IMR-90 (cell line): ENCODE measurements at regions of chr14 and their contacts with region 1.

Region 1: DNA sequence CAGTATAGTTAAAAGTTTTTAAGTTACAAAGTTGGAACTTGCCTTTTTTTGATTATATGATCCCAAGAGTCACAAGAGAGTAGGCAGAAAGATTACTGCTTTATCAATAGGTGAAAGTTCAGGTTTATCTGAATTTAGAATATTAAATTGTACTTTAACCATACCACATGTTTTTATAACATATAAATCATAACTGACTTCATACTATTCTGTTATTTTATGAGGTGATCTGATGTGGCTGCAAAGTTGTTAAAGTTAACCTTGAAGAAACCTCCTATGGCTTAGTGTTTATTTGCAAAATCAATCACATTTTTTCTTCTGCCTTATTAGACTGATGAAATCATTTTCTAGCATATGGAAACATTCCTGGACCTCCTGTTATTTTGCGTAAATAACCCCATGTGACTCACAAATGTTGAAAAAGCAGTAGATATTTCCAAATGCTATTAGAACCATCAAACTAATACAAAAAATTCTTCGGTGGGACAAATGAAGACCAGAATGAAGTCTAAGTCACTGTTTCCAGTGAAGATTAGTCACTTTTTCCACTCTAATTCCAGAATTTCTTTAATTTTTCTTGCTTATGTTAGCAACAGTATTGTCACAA is 132.1 kb downstream of the RAD51B start:
- DNase-seq: peak; percentile 52
- ATAC-seq: no peak
- H3K4me3 ChIP-seq: no peak overlapping the region
- H3K27ac ChIP-seq: no peak overlapping the region
- H3K4me1 ChIP-seq: 0 out of 2 replicates have a peak, but pooled peaks cover 2% of the 10 kb centered on the region
- H3K27me3 ChIP-seq: no peaks in the 10 kb centered on the region
- CTCF ChIP-seq: no peak
- POLR2A ChIP-seq: no peak
- RAD21 ChIP-seq: no peak

Region 2: DNA sequence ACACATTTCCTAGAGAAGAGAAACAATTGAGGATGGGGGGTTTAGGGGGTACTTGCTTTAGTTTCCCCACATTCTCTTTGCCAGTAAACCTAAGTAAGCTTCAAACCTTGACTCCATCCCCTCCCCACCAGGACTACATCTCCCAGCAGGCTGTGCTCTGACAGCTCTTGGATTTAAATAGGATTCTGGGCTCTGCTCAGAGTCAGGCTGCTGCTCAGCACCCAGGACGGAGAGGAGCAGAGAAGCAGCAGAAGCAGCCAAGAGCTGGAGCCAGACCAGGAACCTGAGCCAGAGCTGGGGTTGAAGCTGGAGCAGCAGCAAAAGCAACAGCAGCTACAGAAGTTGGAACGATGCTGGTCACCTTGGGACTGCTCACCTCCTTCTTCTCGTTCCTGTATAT is 229.3 kb before region 1 on chr14:
- CTCF ChIA-PET with region 1: no interaction called
- POLR2A ChIA-PET with region 1: no interaction called
- dilution Hi-C with region 1: no loop called
- in situ Hi-C with region 1: no loop called
- intact Hi-C with region 1: no loop called
- DNase-seq: peak; percentile 37
- ATAC-seq: peak; percentile 87
- H3K4me3 ChIP-seq: no peak overlapping the region
- H3K27ac ChIP-seq: no peak overlapping the region
- H3K4me1 ChIP-seq: no peaks in the 10 kb centered on the region
- H3K27me3 ChIP-seq: peaks cover 47% of the 10 kb centered on the region
- CTCF ChIP-seq: no peak
- POLR2A ChIP-seq: no peak
- RAD21 ChIP-seq: no peak

Region 3: DNA sequence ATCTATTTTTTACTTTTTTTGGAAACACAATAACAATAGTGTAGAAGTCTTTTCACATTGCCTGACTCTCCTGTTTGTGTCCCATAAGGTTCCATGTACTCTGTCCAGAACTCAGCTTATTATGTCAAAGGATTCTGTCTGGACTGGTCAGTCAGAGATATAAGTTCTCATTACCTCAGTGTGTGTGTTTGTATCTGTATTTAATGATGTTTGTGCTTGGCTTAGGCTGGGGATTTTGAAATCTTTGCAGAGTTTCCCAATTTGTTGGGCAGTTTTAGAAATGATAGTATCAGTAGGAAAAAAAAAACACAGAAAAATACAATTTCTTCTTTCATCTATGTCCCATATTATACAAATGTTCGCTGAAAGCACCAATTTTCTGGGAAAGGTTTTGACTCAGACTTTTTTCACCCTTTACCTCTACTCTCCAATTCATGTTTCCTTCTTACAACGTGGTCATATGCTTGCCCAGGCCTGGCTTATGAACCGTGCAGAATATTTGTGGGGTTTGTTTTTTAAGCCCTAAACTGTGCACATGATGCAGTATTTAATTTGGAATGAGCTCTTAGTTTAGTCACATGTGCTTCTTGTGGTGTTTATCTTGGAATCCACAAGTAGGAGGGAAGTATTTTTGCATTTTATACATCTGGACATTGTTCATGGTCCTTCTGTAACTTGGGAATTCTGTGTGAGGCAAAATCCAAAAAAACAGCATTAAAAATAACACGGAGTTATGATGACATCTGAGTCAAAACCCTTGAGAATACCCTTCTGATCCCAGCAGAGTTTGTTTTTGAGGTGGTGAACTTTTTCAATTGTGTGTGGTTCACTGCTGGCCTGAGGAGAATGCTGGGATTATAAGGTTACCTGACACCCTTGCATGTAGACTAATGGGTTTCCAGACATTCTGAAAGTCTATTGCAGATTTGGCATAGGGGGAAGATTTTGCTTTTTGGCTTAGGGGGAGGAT is 10.9 kb before region 1 on chr14:
- CTCF ChIA-PET with region 1: no interaction called
- POLR2A ChIA-PET with region 1: no interaction called
- dilution Hi-C with region 1: no loop called
- in situ Hi-C with region 1: no loop called
- intact Hi-C with region 1: no loop called
- DNase-seq: peak; percentile 83
- ATAC-seq: peak; percentile 61
- H3K4me3 ChIP-seq: no peak overlapping the region
- H3K27ac ChIP-seq: peak overlapping the region; percentile 77; the same call in 1 of the 2 replicates
- H3K4me1 ChIP-seq: peaks cover 17% of the 10 kb centered on the region
- H3K27me3 ChIP-seq: no peaks in the 10 kb centered on the region
- CTCF ChIP-seq: no peak
- POLR2A ChIP-seq: no peak
- RAD21 ChIP-seq: no peak

Region 4: DNA sequence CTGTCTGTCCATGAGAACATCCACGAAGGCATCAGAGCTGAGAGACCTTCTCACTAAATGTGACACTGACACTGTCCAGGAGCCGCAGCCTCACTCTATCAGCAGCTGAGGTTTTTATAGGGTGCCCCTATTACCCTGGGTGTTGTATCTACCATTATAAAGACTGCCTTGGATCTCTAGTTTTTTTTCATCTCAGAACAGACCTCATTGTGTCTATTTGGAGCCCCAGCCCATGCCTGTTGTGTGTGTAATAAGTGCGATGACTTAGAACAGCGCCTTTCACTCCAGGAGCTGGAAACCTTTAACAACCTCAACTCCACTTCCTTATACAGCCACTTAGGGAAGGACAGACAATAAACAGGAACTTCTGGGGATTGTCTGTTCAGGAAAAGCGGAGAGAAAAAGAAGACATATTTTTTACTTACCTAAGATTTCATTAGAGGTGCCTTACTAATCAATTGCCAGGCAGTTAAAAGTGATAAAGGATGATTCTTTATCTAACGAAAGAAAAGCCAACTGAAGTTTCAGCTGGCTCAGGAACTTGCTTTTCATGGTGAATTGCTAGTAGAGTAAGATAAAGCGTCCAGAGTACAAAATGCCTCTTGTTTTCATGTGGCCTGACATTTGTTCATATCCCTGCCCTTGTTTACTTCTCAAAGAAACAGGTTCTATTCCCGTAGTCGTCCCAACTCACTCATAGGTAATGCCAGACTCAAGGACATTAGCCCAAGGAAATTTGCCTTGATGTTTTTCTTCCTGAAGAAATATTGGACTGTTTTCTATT is 288.5 kb after region 1 on chr14:
- CTCF ChIA-PET with region 1: no interaction called
- POLR2A ChIA-PET with region 1: no interaction called
- dilution Hi-C with region 1: no loop called
- in situ Hi-C with region 1: loop called (anchors 5 kb)
- intact Hi-C with region 1: no loop called
- DNase-seq: no peak
- ATAC-seq: no peak
- H3K4me3 ChIP-seq: no peak overlapping the region
- H3K27ac ChIP-seq: no peak overlapping the region
- H3K4me1 ChIP-seq: peaks cover 7% of the 10 kb centered on the region
- H3K27me3 ChIP-seq: no peaks in the 10 kb centered on the region
- CTCF ChIP-seq: no peak
- POLR2A ChIP-seq: no peak
- RAD21 ChIP-seq: no peak